ENCODE measurements at regions of chr6 and their contacts with region 1.

Region 1: DNA sequence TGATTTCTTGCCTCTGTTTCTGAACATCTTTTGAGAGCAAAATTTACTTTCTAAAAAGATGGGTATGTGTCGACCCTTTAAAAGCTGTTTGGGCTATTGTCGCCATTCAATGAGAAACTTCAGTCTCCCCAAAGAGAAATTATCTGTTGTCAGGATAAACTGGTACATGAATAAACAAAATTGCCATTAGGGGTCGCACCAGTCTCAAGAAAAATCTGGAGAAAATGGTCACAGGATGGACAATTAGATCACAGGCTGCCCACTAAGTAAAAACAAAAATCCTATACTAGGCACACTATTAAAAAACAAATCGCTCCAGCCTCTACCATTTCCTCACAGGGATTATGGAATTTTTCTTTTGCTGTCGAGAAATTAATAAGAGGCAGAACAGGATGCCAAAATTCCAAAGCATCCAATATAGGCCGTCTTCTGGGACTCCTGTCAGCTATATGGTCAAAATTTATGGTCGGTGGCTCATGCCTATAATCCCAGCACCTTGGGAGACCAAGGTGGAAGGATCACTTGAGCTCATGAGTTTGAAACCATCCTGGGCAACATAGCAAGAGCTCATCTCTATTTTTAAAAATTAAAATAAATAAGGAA is 5.5 kb upstream of the HLA-E start:
- DNase-seq: peak; percentile 84
- H3K4me3 ChIP-seq: no peak overlapping the region
- H3K27ac ChIP-seq: no peak overlapping the region
- H3K4me1 ChIP-seq: peaks cover 11% of the 10 kb centered on the region
- H3K27me3 ChIP-seq: peaks cover 29 to 32% of the 10 kb centered on the region in 2 experiments
- CTCF ChIP-seq: peak; percentile 36 to 40
- POLR2A ChIP-seq: no peak

Region 2: DNA sequence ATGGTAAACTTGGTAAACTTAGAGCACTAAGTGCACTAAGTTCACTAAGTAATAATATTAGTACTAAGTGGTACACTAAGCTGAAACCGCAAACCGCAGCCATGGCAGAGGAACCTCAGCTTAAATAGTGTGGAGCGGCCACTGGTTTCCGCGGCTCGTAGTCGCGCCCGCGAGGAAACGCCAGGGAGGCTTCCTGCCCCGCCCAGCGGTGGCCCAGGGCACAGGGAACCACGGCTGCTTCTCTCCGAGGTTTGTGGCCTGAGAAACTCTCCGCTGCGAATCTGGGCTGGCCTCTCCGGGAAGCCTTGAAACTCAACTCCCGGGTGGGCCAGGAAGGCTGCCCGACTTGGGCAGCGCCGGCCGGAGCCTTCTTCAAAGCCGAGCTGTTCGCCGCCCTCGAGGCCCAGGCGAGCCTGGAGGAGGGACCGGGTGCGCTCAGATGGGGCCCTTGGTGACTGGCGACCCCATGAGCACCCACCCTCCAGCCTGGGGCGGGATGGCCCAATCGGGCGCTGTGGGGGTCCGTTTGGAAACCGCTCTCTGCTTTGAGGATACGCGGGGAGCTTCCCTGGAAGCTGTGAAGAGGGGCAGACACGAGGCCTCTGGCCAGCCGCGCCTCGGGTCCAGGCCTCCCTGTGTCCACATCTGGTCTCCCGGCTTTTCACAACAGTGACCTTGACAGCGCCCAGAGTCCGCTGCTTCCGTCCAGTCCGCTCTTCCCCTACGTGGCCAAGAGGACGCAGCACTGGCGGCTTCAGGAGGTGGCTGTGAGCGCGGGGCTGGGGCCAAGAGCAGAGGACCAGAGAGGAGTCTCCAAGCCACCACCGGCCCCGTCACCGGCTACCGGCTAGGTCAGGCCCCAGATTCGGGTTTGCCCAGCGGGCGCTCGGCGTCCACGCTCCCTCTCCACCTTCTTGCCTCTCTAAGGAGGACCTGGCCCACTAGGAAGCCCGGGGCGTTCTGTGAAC is 19.8 kb before region 1 on chr6:
- CTCF ChIA-PET with region 1: interaction called, 17 read pairs
- POLR2A ChIA-PET with region 1: no interaction called
- dilution Hi-C with region 1: no loop called
- intact Hi-C with region 1: no loop called
- DNase-seq: no peak
- H3K4me3 ChIP-seq: no peak overlapping the region
- H3K27ac ChIP-seq: no peak overlapping the region
- H3K4me1 ChIP-seq: peaks cover 2% of the 10 kb centered on the region
- H3K27me3 ChIP-seq: peaks cover 79 to 92% of the 10 kb centered on the region in 2 experiments
- CTCF ChIP-seq: no peak
- POLR2A ChIP-seq: no peak

Region 3: DNA sequence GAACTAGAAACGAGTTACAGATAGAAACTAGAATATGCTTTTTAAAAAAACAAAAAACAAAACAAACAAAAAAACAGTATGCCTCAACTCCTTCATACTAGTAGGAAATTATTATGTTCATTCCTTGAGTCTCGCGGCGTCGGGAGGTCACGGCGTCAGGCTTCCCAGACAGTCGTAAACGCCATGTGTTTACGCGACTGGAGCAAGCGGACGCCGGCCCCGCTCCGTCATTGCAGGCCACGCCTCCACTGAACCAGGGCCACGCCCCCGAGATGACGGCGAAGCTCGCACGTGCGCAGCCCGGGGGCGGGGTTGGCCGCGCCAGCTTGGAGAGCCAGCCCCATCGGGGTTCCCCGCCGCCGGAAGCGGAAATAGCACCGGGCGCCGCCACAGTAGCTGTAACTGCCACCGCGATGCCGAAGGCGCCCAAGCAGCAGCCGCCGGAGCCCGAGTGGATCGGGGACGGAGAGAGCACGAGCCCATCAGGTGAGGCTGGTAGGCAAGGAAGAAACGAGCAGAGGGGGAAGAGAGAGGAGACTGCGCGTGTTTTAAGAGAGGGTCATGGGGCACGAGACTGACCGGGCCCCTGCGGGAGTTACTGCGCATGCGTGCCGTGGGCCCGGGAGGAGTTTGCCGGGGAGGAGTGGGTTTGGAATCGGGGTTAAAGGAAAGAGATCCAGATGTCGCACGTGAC is 87.4 kb after region 1 on chr6 and contains the start of gene ABCF1:
- CTCF ChIA-PET with region 1: interaction called, 9 read pairs
- POLR2A ChIA-PET with region 1: no interaction called
- dilution Hi-C with region 1: no loop called
- intact Hi-C with region 1: loop called (anchors 1 kb)
- DNase-seq: peak; percentile 99
- H3K4me3 ChIP-seq: peak within 1 kb of the TSS; percentile 57 to 86 (median 76)
- H3K27ac ChIP-seq: peak within 1 kb of the TSS; percentile 86
- H3K4me1 ChIP-seq: peaks cover 18% of the 10 kb centered on the region
- H3K27me3 ChIP-seq: no peaks in the 10 kb centered on the region
- CTCF ChIP-seq: no peak
- POLR2A ChIP-seq: no peak
- total RNA-seq, gene ABCF1: 55.8 and 60.3 TPM in 2 replicates

Region 4: DNA sequence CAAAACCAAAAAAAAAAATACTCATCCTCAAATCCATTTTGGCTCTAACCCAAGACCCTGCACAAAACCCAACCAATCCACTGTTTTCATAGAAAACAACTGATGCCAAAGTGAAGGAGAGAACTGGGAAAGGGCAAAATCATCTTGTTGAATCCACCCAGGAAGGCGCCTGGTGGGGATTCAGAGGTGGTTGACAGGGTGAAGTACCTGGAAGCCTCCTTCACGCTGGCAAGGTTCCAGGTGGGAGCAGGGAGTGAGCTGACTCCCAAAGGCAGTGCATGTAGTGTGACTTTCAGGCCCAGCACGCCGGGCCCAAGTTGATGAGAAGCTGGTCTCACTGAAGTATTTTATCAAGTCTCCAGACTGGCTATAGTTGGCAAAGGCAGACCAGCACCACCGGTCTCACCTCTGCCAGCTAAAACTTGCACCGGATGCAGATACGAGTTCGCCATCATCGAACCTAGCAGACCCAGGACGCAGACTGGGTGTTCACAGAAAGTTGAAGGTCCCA is 116.7 kb after region 1 on chr6:
- CTCF ChIA-PET with region 1: interaction called, 149 read pairs
- POLR2A ChIA-PET with region 1: interaction called, 7 read pairs
- dilution Hi-C with region 1: no loop called
- intact Hi-C with region 1: loop called (anchors 1 kb)
- DNase-seq: no peak
- H3K4me3 ChIP-seq: no peak overlapping the region
- H3K27ac ChIP-seq: no peak overlapping the region
- H3K4me1 ChIP-seq: peaks cover 8% of the 10 kb centered on the region
- H3K27me3 ChIP-seq: no peaks in the 10 kb centered on the region
- CTCF ChIP-seq: no peak
- POLR2A ChIP-seq: peak; percentile 20

Region 5: DNA sequence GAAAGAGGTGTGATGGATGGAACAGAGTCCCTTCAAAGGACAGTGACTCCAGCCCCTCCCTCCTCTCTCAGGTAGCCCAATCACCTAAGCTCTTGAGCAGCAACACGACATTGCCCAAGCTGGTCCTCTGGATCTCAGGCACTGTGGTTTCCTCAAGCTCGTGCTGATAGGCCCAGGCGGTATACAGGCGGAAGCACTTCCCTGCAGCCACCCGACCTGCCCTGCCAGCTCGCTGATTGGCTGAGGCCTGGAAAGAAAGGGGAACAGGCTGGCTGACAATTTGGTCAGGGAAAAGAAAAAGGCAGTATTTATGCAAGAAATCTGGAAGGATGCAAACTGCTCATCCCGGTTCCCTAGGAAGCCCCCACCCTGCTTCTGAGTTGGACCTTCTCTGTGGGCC is 172.7 kb after region 1 on chr6:
- CTCF ChIA-PET with region 1: no interaction called
- POLR2A ChIA-PET with region 1: no interaction called
- dilution Hi-C with region 1: no loop called
- intact Hi-C with region 1: no loop called
- DNase-seq: no peak
- H3K4me3 ChIP-seq: no peak overlapping the region
- H3K27ac ChIP-seq: no peak overlapping the region
- H3K4me1 ChIP-seq: no peaks in the 10 kb centered on the region
- H3K27me3 ChIP-seq: no peaks in the 10 kb centered on the region
- CTCF ChIP-seq: no peak
- POLR2A ChIP-seq: no peak

Region 6: GRCh38 chr6:30672445-30673253 is 188.9 kb after region 1 on chr6 and contains the start of gene DHX16:
- CTCF ChIA-PET with region 1: interaction called, 25 read pairs
- POLR2A ChIA-PET with region 1: no interaction called
- dilution Hi-C with region 1: no loop called
- intact Hi-C with region 1: loop called (anchors 1 kb)
- DNase-seq: peak; percentile 97
- H3K4me3 ChIP-seq: peak within 1 kb of the TSS; percentile 38 to 82 (median 73)
- H3K27ac ChIP-seq: peak within 1 kb of the TSS; percentile 11
- H3K4me1 ChIP-seq: peaks cover 6% of the 10 kb centered on the region
- H3K27me3 ChIP-seq: no peaks in the 10 kb centered on the region
- CTCF ChIP-seq: peak; percentile 84 to 93
- POLR2A ChIP-seq: peak; percentile 85
- total RNA-seq, gene DHX16: 36.3 and 38.2 TPM in 2 replicates

Region 7: DNA sequence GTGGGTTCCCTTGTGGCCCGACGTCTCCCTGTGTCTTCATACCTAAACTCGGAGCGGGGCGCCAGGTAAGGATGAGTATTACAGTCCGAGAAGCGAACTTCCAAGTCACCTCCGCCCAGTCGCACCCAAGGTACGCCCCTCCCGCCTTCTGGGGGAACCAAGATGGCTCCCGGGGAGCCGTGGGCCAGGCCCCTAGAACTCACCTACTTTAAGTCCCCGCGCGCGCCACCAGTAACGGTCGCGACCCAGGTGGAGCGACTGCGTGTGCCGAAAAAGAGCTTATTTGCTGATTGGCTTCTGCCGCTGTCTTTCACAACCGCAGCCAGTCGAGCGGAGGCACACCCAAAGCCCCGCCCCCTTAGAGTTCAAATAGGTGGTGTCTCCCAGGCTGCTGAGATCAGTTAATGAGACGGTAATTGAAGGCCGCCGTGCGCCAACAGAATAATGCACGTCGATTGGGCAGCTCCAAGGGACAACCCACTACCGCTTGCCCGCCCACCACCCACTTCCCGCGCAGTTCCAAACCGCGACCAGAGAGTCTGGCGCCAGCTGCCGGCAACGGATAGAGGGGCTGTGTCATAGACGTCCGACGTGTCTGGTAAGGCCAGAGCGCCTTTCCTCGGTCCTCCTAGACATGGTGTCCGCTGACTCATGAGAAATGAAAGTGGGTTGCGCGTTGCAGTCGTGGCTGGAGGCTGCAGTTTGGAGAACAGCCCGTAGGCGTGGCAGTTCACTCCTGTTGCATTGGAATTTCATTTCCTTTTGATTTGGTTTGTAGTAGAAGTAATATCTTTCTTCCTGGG is 233.5 kb after region 1 on chr6 and contains the start of gene MDC1:
- CTCF ChIA-PET with region 1: interaction called, 6 read pairs
- POLR2A ChIA-PET with region 1: no interaction called
- dilution Hi-C with region 1: no loop called
- intact Hi-C with region 1: loop called (anchors 2 kb)
- DNase-seq: peak; percentile 100
- H3K4me3 ChIP-seq: peak within 1 kb of the TSS; percentile 7 to 80 (median 72)
- H3K27ac ChIP-seq: peak within 1 kb of the TSS; percentile 82
- H3K4me1 ChIP-seq: peaks cover 23% of the 10 kb centered on the region
- H3K27me3 ChIP-seq: no peaks in the 10 kb centered on the region
- CTCF ChIP-seq: peak in 1 of 2 donors; percentile 34
- POLR2A ChIP-seq: peak; percentile 82
- total RNA-seq, gene MDC1: 42.3 and 43.6 TPM in 2 replicates

Measured in endothelial cell of umbilical vein (primary cell).